GM12878 (cell line): ENCODE measurements at regions of chr2 and their contacts with region 1.

Region 1: GRCh38 chr2:31138037-31138962 is at the start of gene GALNT14:
- DNase-seq: no peak
- ATAC-seq: peak; percentile 82
- H3K4me3 ChIP-seq: peak within 1 kb of the TSS; percentile 32; the same call in 1 of the 2 replicates
- H3K27ac ChIP-seq: no peak within 1 kb of the TSS
- H3K4me1 ChIP-seq: no peaks in the 10 kb centered on the region; the same call in 1 of the 2 replicates
- H3K27me3 ChIP-seq: peaks cover 2 to 27% of the 10 kb centered on the region in 2 experiments
- CTCF ChIP-seq: peak; percentile 25 to 50 (median 41); a peak in 4 of 6 replicates
- EP300 ChIP-seq: no peak
- POLR2A ChIP-seq: no peak
- RAD21 ChIP-seq: no peak
- polyA plus RNA-seq, gene GALNT14: 3.7 to 4.1 TPM

Region 2: DNA sequence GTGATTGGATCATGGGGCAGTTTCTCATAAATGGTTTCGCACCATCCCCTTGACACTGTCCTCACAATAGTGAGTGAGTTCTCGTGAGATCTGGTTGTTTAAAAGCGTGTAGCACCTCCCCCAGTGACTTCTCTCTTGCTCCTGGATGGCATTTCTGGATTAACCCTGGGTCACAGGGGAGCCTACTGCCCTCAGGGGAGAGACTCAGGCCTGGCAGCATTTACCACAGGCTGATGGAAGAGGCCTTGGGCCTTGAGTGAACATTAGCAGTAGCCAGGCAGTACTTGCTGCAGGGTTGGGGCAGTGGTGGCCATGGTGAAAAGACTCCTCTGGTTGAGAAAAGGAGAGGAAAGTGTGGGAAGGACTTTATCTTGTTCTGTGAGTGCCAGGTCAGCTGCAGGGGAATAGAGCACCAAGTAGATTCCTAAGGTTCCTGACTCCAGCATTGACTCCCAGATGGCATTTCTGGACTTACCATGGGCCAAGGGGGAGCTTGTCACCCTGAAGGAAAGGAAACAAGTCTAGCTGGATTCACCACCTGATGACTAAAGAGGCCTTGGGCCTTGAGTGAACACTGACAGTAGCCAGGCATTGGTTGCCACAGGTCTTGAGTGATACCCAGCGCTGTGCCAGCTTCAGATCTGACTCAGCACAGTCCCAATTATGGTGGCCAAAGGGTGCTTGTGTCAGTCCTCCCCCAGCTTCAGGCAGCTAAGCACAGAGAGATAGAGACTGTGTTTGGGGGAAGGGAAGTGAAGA is 291.1 kb before region 1 on chr2:
- CTCF ChIA-PET with region 1: no interaction called
- POLR2A ChIA-PET with region 1: no interaction called
- RAD21 ChIA-PET with region 1: no interaction called
- SMC1A ChIA-PET with region 1: no interaction called
- in situ Hi-C with region 1: no loop called
- intact Hi-C with region 1: no loop called
- DNase-seq: no peak
- ATAC-seq: no peak
- H3K4me3 ChIP-seq: no peak overlapping the region
- H3K27ac ChIP-seq: no peak overlapping the region
- H3K4me1 ChIP-seq: no peaks in the 10 kb centered on the region
- H3K27me3 ChIP-seq: no peaks in the 10 kb centered on the region
- CTCF ChIP-seq: no peak
- EP300 ChIP-seq: no peak
- POLR2A ChIP-seq: no peak
- RAD21 ChIP-seq: no peak

Region 3: GRCh38 chr2:31031132-31031706 is 107.1 kb before region 1 on chr2:
- CTCF ChIA-PET with region 1: no interaction called
- POLR2A ChIA-PET with region 1: no interaction called
- RAD21 ChIA-PET with region 1: no interaction called
- SMC1A ChIA-PET with region 1: no interaction called
- in situ Hi-C with region 1: no loop called
- intact Hi-C with region 1: loop called (anchors 5 kb)
- DNase-seq: peak; percentile 25
- ATAC-seq: peak; percentile 96
- H3K4me3 ChIP-seq: no peak overlapping the region
- H3K27ac ChIP-seq: no peak overlapping the region
- H3K4me1 ChIP-seq: peaks cover 6% of the 10 kb centered on the region
- H3K27me3 ChIP-seq: no peaks in the 10 kb centered on the region; a peak in 1 of 4 replicates
- CTCF ChIP-seq: no peak
- EP300 ChIP-seq: 0 out of 4 replicates have a peak, but pooled peaks of 1 of the 2 experiments have one; percentile 37
- POLR2A ChIP-seq: no peak
- RAD21 ChIP-seq: no peak

Region 4: GRCh38 chr2:31151501-31151900 is 13.2 kb after region 1 on chr2:
- CTCF ChIA-PET with region 1: interaction called, 14 read pairs
- POLR2A ChIA-PET with region 1: no interaction called
- RAD21 ChIA-PET with region 1: interaction called, 7 read pairs
- SMC1A ChIA-PET with region 1: interaction called, 5 read pairs
- in situ Hi-C with region 1: no loop called
- intact Hi-C with region 1: no loop called
- DNase-seq: no peak
- ATAC-seq: no peak
- H3K4me3 ChIP-seq: no peak overlapping the region
- H3K27ac ChIP-seq: no peak overlapping the region
- H3K4me1 ChIP-seq: no peaks in the 10 kb centered on the region
- H3K27me3 ChIP-seq: no peaks in the 10 kb centered on the region; a peak in 1 of 4 replicates
- CTCF ChIP-seq: 0 out of 6 replicates have a peak, but pooled peaks of 1 of the 3 experiments have one; percentile 4
- EP300 ChIP-seq: no peak
- POLR2A ChIP-seq: no peak
- RAD21 ChIP-seq: no peak

Region 5: DNA sequence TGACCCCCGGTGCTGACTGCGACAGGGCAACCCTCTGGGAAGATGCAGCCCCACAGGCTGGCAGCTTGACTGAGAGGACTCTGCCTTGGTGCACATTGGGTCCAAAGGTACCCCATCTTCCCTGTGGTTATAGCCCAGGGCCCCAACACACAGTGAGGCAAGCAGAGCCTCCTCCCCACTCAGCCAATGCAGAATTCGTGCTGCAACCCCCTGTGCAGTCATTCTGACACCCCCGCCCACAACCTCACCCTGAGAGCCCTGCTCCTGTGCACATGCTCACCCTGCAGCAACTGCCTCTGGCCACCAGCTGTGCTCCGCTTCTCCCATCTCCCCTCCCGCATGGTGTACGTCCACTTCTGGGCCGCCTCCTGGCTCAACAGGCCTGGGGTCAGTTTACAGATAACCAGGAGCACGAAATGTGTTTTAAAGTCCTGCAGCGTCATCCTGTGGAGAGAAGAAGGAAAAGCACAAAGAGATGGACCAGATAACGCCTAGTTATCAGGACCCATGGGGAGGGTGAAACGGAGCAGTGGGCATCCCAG is 54.6 kb after region 1 on chr2:
- CTCF ChIA-PET with region 1: no interaction called
- POLR2A ChIA-PET with region 1: no interaction called
- RAD21 ChIA-PET with region 1: no interaction called
- SMC1A ChIA-PET with region 1: no interaction called
- in situ Hi-C with region 1: no loop called
- intact Hi-C with region 1: no loop called
- DNase-seq: no peak
- ATAC-seq: no peak
- H3K4me3 ChIP-seq: no peak overlapping the region
- H3K27ac ChIP-seq: no peak overlapping the region
- H3K4me1 ChIP-seq: no peaks in the 10 kb centered on the region
- H3K27me3 ChIP-seq: no peaks in the 10 kb centered on the region
- CTCF ChIP-seq: no peak
- EP300 ChIP-seq: no peak
- POLR2A ChIP-seq: no peak
- RAD21 ChIP-seq: no peak

Region 6: GRCh38 chr2:31386648-31387047 is 248.3 kb after region 1 on chr2:
- CTCF ChIA-PET with region 1: no interaction called
- POLR2A ChIA-PET with region 1: no interaction called
- RAD21 ChIA-PET with region 1: no interaction called
- SMC1A ChIA-PET with region 1: no interaction called
- in situ Hi-C with region 1: no loop called
- intact Hi-C with region 1: no loop called
- DNase-seq: no peak
- ATAC-seq: no peak
- H3K4me3 ChIP-seq: no peak overlapping the region
- H3K27ac ChIP-seq: no peak overlapping the region
- H3K4me1 ChIP-seq: no peaks in the 10 kb centered on the region
- H3K27me3 ChIP-seq: no peaks in the 10 kb centered on the region; a peak in 1 of 4 replicates
- CTCF ChIP-seq: 0 out of 6 replicates have a peak, but pooled peaks of 1 of the 3 experiments have one; percentile 4
- EP300 ChIP-seq: no peak
- POLR2A ChIP-seq: no peak
- RAD21 ChIP-seq: no peak